Activated T-helper 2 cell treated with anti-CD3 and anti-CD28 coated beads, Interferon-gamma antibody, Interleukin-2, Interleukin-4, amounts not matched to agents 10 μg/mL and 5 μg/mL and 100 μg/mL, durations not matched to agents 14 hours and 24 hours and 36 hours (primary cell): ENCODE measurements at regions of chr4 and their contacts with region 1.

Region 1: GRCh38 chr4:40309250-40309774 is 25.8 kb upstream of the CHRNA9 start:
- DNase-seq: peak; percentile 82
- H3K4me3 Mint-ChIP-seq: peak overlapping the region; percentile 45
- H3K27ac Mint-ChIP-seq: peak overlapping the region; percentile 95
- H3K4me1 Mint-ChIP-seq: peaks cover 80% of the 10 kb centered on the region
- H3K27me3 Mint-ChIP-seq: no peaks in the 10 kb centered on the region

Region 2: GRCh38 chr4:39353478-39354253 is 955.6 kb before region 1 on chr4:
- intact Hi-C with region 1: no loop called
- DNase-seq: no peak
- H3K4me3 Mint-ChIP-seq: peak overlapping the region; percentile 72
- H3K27ac Mint-ChIP-seq: peak overlapping the region; percentile 93
- H3K4me1 Mint-ChIP-seq: peaks cover 52% of the 10 kb centered on the region
- H3K27me3 Mint-ChIP-seq: no peaks in the 10 kb centered on the region

Region 3: GRCh38 chr4:40149960-40150385 is 159.3 kb before region 1 on chr4:
- intact Hi-C with region 1: loop called (anchors 1 kb)
- DNase-seq: peak; percentile 61
- H3K4me3 Mint-ChIP-seq: no peak overlapping the region
- H3K27ac Mint-ChIP-seq: peak overlapping the region; percentile 42
- H3K4me1 Mint-ChIP-seq: peaks cover 10% of the 10 kb centered on the region
- H3K27me3 Mint-ChIP-seq: no peaks in the 10 kb centered on the region

Region 4: GRCh38 chr4:40255393-40256281 is 53.7 kb before region 1 on chr4:
- intact Hi-C with region 1: loop called (anchors 2 kb)
- DNase-seq: no peak
- H3K4me3 Mint-ChIP-seq: peak overlapping the region; percentile 15
- H3K27ac Mint-ChIP-seq: peak overlapping the region; percentile 85
- H3K4me1 Mint-ChIP-seq: peaks cover 52% of the 10 kb centered on the region
- H3K27me3 Mint-ChIP-seq: no peaks in the 10 kb centered on the region

Region 5: DNA sequence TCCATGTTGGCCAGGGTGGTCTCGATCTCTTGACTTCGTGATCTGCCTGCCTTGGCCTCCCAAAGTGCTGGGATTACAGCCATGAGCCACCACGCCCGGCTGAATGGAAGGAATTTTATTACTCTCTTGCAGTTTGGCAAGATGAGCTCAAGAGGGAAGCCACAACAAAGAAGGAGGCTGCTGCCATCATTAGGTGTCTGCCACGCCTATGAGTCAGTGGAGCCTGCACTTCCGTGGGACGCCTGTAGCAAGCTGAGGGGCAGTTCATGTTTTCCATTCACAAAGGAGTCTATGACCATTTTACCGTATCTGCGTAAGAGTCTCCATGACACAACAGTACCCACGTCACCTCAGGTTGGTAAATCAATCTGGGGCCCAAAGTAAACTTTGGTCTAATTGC is 25.3 kb before region 1 on chr4:
- intact Hi-C with region 1: loop called (anchors 1 kb)
- DNase-seq: peak; percentile 70
- H3K4me3 Mint-ChIP-seq: peak overlapping the region; percentile 45
- H3K27ac Mint-ChIP-seq: peak overlapping the region; percentile 96
- H3K4me1 Mint-ChIP-seq: peaks cover 47% of the 10 kb centered on the region
- H3K27me3 Mint-ChIP-seq: no peaks in the 10 kb centered on the region

Region 6: GRCh38 chr4:40289366-40290188 is 19.7 kb before region 1 on chr4:
- intact Hi-C with region 1: loop called (anchors 1 kb)
- DNase-seq: no peak
- H3K4me3 Mint-ChIP-seq: peak overlapping the region; percentile 24
- H3K27ac Mint-ChIP-seq: peak overlapping the region; percentile 82
- H3K4me1 Mint-ChIP-seq: peaks cover 43% of the 10 kb centered on the region
- H3K27me3 Mint-ChIP-seq: no peaks in the 10 kb centered on the region